B cell (primary cell): ENCODE measurements at regions of chr20 and their contacts with region 1.

Region 1: DNA sequence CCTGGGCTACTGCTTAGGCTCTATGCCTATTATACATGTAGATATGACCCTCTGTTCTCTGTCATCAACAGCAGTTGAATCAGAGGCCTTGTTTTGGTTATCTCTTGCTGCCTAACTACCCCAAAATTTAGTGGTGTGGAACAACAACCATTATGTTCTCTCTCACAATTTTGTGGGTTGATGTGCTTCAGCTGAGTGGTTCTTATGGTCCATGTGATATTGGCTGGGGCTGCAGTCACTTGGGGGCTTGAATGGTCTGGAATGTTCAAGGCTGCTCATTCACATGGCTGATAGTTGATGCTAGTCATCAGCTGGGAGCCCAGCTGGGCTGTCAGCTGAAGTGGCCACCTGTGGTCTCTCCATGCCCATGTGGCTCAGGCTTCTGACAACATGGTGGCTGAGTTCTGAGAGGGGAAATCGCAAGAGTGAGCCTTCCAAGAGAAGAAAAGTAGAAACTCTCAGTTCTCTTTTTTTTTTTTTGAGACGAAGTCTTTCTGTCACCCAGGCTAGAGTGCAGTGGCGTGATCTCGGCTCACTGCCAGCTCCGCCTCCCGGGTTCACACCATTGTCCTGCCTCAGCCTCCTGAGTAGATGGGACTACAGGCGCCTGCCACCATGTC is 47.8 kb downstream of the SHLD1 start:
- DNase-seq: peak; percentile 89
- ATAC-seq: peak; percentile 87
- H3K4me3 ChIP-seq: peak overlapping the region in 1 of 5 experiments; percentile 3
- H3K4me3 Mint-ChIP-seq: peak overlapping the region; percentile 73
- H3K27ac ChIP-seq: peak overlapping the region; percentile 84 to 89
- H3K27ac Mint-ChIP-seq: peak overlapping the region; percentile 100
- H3K4me1 ChIP-seq: peaks cover 17 to 32% of the 10 kb centered on the region in 2 donors
- H3K4me1 Mint-ChIP-seq: peaks cover 27% of the 10 kb centered on the region
- H3K27me3 ChIP-seq: no peaks in the 10 kb centered on the region
- H3K27me3 Mint-ChIP-seq: no peaks in the 10 kb centered on the region
- CTCF ChIP-seq: no peak

Region 2: GRCh38 chr20:5426026-5426425 is 371.9 kb before region 1 on chr20:
- CTCF ChIA-PET with region 1: no interaction called
- POLR2A ChIA-PET with region 1: no interaction called
- intact Hi-C with region 1: no loop called
- DNase-seq: no peak
- ATAC-seq: no peak
- H3K4me3 ChIP-seq: no peak overlapping the region
- H3K4me3 Mint-ChIP-seq: no peak overlapping the region
- H3K27ac ChIP-seq: no peak overlapping the region
- H3K27ac Mint-ChIP-seq: no peak overlapping the region
- H3K4me1 ChIP-seq: no peaks in the 10 kb centered on the region
- H3K4me1 Mint-ChIP-seq: no peaks in the 10 kb centered on the region
- H3K27me3 ChIP-seq: peaks cover 0 to 4% (median 3%) of the 10 kb centered on the region in 4 experiments
- H3K27me3 Mint-ChIP-seq: peaks cover 34% of the 10 kb centered on the region
- CTCF ChIP-seq: no peak

Region 3: GRCh38 chr20:5557123-5557522 is 240.8 kb before region 1 on chr20:
- CTCF ChIA-PET with region 1: interaction called, 10 read pairs
- POLR2A ChIA-PET with region 1: no interaction called
- intact Hi-C with region 1: no loop called
- DNase-seq: peak; percentile 63
- ATAC-seq: peak; percentile 49
- H3K4me3 ChIP-seq: no peak overlapping the region
- H3K4me3 Mint-ChIP-seq: no peak overlapping the region
- H3K27ac ChIP-seq: no peak overlapping the region
- H3K27ac Mint-ChIP-seq: no peak overlapping the region
- H3K4me1 ChIP-seq: no peaks in the 10 kb centered on the region
- H3K4me1 Mint-ChIP-seq: peaks cover 1% of the 10 kb centered on the region
- H3K27me3 ChIP-seq: no peaks in the 10 kb centered on the region
- H3K27me3 Mint-ChIP-seq: no peaks in the 10 kb centered on the region
- CTCF ChIP-seq: peak; percentile 69

Region 4: DNA sequence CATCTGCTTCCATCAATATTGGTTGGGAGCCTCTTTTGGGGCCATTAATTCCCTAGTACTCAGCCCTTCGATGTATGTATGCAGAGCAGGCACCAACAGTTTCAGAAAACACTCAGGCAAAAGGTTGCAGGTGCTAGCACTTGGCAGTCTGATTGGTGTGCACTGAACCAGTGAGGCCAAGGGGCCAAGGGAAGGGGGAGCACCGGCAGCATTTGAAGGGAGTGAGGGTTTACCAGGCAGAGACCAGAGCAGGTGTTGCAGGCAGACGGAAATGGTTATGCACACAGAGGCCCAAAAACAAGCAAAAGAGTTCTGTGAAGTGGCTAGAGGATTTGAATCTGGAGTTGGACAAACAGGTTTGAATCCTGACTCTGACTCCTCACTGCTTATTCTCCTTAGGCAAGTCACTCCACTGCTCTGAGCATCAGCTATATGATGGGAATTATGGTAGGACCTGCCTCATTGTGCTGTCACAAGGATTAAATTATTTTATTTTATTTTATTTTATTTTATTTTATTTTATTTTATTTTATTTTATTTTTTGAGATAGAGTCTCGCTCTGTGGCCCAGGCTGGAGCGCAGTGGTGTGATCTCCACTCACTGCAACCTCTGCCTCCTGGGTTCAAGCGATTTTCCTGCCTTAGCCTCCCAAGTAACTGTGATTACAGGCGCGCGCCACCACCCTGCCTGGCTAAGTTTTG is 105.9 kb before region 1 on chr20:
- CTCF ChIA-PET with region 1: no interaction called
- POLR2A ChIA-PET with region 1: no interaction called
- intact Hi-C with region 1: loop called (anchors 1 kb)
- DNase-seq: peak; percentile 83
- ATAC-seq: peak; percentile 100
- H3K4me3 ChIP-seq: peak overlapping the region in 1 of 5 experiments; percentile 14
- H3K4me3 Mint-ChIP-seq: peak overlapping the region; percentile 69
- H3K27ac ChIP-seq: peak overlapping the region in 1 of 2 donors; percentile 25
- H3K27ac Mint-ChIP-seq: peak overlapping the region; percentile 86
- H3K4me1 ChIP-seq: peaks cover 30 to 40% of the 10 kb centered on the region in 2 donors
- H3K4me1 Mint-ChIP-seq: peaks cover 18% of the 10 kb centered on the region
- H3K27me3 ChIP-seq: no peaks in the 10 kb centered on the region
- H3K27me3 Mint-ChIP-seq: no peaks in the 10 kb centered on the region
- CTCF ChIP-seq: no peak

Region 5: DNA sequence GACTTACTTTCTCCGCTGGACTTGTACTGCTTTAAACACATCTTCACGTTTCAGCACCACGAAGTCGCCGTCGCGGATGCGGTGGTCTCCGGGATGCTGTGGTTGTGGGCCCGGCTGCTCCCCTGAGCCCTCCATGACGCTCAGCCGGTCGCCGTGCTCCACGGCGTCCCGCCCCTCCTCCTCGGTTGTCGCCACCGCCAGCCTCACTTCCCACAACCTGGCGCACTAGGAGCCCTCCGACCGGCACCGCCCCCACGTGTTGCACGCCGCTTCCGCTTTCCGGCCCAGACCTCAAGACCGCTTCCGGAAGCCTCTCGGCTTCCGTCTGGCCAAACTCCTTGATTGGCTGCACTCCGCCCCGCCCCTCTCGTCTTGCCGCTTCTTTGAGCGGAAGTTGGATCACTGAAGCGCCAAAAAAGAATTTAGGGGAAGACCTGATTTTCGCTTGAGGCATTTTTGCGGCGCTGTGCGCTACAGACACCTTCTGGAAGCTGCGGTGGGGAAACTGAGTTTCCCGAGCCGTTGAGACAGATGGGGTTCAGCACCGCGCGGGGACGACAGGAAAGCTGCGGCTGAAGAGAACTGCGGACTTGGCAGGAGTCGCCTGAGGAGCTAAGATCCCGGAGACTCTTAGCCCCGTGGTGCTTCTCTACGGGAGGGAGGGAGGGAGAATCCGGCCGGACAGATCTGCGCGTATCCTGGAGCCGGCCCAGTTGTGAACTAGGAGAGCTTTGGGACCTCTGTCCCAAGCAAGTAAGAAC is 152.5 kb after region 1 on chr20 and contains the starts of genes MCM8 and TRMT6:
- CTCF ChIA-PET with region 1: interaction called, 6 read pairs
- POLR2A ChIA-PET with region 1: interaction called, 5 read pairs
- intact Hi-C with region 1: loop called (anchors 2 kb)
- DNase-seq: peak; percentile 98
- ATAC-seq: peak; percentile 98
- H3K4me3 ChIP-seq: peak within 1 kb of the TSS; percentile 77 to 88 (median 85)
- H3K4me3 Mint-ChIP-seq: peak within 1 kb of the TSS; percentile 94
- H3K27ac ChIP-seq: peak within 1 kb of the TSS; percentile 74 to 90
- H3K27ac Mint-ChIP-seq: peak within 1 kb of the TSS; percentile 95
- H3K4me1 ChIP-seq: peaks cover 14 to 18% of the 10 kb centered on the region in 2 donors
- H3K4me1 Mint-ChIP-seq: peaks cover 21% of the 10 kb centered on the region
- H3K27me3 ChIP-seq: no peaks in the 10 kb centered on the region
- H3K27me3 Mint-ChIP-seq: no peaks in the 10 kb centered on the region
- CTCF ChIP-seq: no peak
- total RNA-seq, gene MCM8: 13.7 and 13.8 TPM in 2 replicates
- total RNA-seq, gene TRMT6: 14.2 and 18.2 TPM in 2 replicates